PC-9 (cell line): ENCODE measurements at regions of chr3 and their contacts with region 1.

Region 1: GRCh38 chr3:8869613-8870012 is 93.7 kb downstream of the RAD18 start:
- DNase-seq: peak; percentile 70 to 98
- H3K4me3 ChIP-seq: no peak overlapping the region
- H3K27ac ChIP-seq: peak overlapping the region; percentile 94
- H3K4me1 ChIP-seq: peaks cover 29% of the 10 kb centered on the region
- H3K27me3 ChIP-seq: no peaks in the 10 kb centered on the region
- CTCF ChIP-seq: no peak

Region 2: DNA sequence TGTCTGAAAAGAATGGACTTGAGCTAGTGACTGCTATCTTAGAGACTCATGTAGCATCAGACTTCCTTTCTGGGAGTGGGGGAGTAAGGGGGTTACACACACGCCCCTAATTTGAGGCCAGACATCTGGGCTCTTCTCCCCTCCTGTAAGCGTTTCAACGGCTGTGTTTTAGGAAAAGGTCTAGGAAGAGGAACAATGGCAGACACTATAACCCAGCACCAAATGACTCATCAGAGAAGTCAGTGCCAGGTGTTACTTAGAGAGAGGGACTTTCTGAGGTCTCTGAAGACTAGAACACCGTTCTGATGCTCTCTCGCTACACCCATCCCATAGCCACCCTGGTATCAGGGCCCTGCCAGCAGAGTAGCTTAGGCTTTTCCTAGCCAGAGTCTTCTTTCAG is 290.5 kb before region 1 on chr3:
- CTCF ChIA-PET with region 1: no interaction called
- POLR2A ChIA-PET with region 1: no interaction called
- intact Hi-C with region 1: no loop called
- DNase-seq: no peak
- H3K4me3 ChIP-seq: no peak overlapping the region
- H3K27ac ChIP-seq: no peak overlapping the region
- H3K4me1 ChIP-seq: peaks cover 30% of the 10 kb centered on the region
- H3K27me3 ChIP-seq: no peaks in the 10 kb centered on the region
- CTCF ChIP-seq: no peak

Region 3: DNA sequence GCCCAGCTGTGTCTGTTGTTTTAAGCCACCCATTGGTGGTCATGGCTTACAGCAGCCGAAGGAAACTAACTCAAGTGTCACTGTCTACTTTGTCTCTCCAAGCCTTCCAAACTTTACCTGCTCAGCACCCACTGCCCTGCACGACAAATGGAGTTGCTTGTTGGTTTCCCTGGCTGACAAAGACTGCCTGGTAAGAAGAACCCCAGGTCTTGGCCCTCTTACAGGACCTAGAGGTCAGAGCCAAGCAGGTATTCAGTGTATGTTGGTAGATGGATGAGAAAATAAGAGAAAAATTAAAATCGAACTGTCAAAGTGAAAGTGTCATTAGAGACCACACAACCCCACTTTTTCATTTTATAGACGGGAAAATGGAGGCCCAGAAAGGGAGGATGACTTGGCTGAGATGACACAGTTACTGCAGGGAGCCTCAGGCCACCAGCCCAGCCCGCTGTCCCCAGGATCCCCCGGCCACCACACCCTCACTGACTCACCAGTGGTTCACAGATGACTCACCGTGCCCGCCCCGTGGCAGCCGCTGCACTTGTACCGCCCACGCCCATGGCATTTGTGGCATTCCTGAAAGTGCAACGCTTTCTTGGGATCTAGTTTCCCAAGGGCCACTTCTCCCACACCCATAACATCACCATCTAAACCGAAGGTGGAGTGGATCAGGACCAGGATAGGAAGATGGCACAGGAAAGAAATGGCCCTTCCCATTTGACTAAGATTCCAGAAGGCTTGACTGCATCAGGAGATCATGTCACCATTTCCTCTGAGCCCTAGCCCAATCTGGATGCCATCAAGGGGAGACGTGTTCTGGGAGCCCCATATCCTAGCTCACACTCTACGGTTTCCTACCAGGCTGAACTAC is 240.2 kb before region 1 on chr3:
- CTCF ChIA-PET with region 1: no interaction called
- POLR2A ChIA-PET with region 1: no interaction called
- intact Hi-C with region 1: loop called (anchors 1 kb)
- DNase-seq: peak; percentile 90 to 91
- H3K4me3 ChIP-seq: no peak overlapping the region
- H3K27ac ChIP-seq: peak overlapping the region; percentile 90
- H3K4me1 ChIP-seq: peaks cover 27% of the 10 kb centered on the region
- H3K27me3 ChIP-seq: no peaks in the 10 kb centered on the region
- CTCF ChIP-seq: no peak

Region 4: GRCh38 chr3:8776406-8776805 is 93.2 kb before region 1 on chr3:
- CTCF ChIA-PET with region 1: interaction called, 3 read pairs
- POLR2A ChIA-PET with region 1: no interaction called
- intact Hi-C with region 1: loop called (anchors 10 kb)
- DNase-seq: peak in 1 of 2 experiments; percentile 15
- H3K4me3 ChIP-seq: no peak overlapping the region
- H3K27ac ChIP-seq: no peak overlapping the region
- H3K4me1 ChIP-seq: no peaks in the 10 kb centered on the region
- H3K27me3 ChIP-seq: no peaks in the 10 kb centered on the region
- CTCF ChIP-seq: no peak

Region 5: DNA sequence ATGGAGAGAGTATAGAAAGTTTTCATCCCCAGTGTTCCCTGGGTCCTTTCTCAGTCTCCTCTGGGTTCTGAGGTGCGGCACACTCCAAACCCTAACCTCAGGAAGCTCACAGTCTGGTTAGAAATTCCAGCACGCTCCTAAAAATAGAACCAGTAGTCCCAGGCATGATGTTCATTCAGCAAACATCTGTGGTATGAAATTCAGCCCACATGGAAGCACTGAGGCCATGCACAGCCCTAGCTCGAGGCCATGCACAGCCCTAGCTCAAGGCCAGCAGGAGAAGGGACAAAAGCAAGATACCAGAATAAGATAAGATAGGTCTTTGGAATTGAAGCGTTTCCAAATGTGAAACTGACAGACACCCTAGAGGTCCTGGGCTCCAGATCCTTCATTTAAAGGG is 17.9 kb before region 1 on chr3:
- CTCF ChIA-PET with region 1: no interaction called
- POLR2A ChIA-PET with region 1: interaction called, 8 read pairs
- intact Hi-C with region 1: loop called (anchors 1 kb)
- DNase-seq: peak in 1 of 2 experiments; percentile 67
- H3K4me3 ChIP-seq: no peak overlapping the region
- H3K27ac ChIP-seq: no peak overlapping the region
- H3K4me1 ChIP-seq: no peaks in the 10 kb centered on the region
- H3K27me3 ChIP-seq: no peaks in the 10 kb centered on the region
- CTCF ChIP-seq: no peak

Region 6: GRCh38 chr3:8938021-8938420 is 68.4 kb after region 1 on chr3:
- CTCF ChIA-PET with region 1: no interaction called
- POLR2A ChIA-PET with region 1: no interaction called
- intact Hi-C with region 1: loop called (anchors 2 kb)
- DNase-seq: no peak
- H3K4me3 ChIP-seq: no peak overlapping the region
- H3K27ac ChIP-seq: peak overlapping the region; percentile 84
- H3K4me1 ChIP-seq: peaks cover 29% of the 10 kb centered on the region
- H3K27me3 ChIP-seq: no peaks in the 10 kb centered on the region
- CTCF ChIP-seq: peak; percentile 66

Region 7: DNA sequence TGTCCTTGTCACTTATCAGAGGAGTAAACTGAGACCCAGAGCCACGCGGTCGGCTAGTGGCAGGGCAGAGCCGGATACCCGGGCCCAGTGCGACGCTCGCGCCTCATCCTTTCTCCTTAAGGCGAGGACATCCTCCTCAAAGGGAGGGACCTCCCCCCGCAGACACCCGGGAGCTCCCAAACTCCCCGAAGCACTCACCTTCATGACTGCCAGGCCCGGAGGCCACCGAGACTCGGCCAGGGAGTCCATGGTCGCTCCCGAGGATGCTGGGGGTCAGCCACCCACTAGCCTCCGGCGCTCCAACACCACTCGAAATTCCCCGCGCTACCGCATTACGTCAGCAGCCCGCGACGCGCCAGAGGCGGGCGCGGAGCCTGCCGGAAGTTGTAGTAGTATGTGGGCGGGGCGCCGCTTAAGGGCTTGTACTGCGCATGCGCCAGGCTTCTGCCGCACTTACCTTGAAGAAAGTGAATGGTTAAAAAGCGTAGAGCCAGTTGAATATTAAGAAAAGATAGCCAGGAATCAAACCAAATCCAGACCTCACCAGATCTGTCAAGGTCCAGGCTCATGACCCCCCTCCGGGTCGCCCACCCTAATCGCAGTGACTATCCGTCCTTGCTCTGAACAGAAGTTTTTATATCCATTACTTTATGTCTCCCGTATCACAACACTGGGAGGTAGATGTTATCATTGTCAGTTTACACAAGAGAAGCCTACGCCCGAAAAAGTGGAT is 93.7 kb after region 1 on chr3 and contains the start of gene RAD18:
- CTCF ChIA-PET with region 1: no interaction called
- POLR2A ChIA-PET with region 1: no interaction called
- intact Hi-C with region 1: loop called (anchors 5 kb)
- DNase-seq: peak; percentile 70 to 90
- H3K4me3 ChIP-seq: peak within 1 kb of the TSS; percentile 69
- H3K27ac ChIP-seq: peak within 1 kb of the TSS; percentile 77
- H3K4me1 ChIP-seq: peaks cover 37% of the 10 kb centered on the region
- H3K27me3 ChIP-seq: no peaks in the 10 kb centered on the region
- CTCF ChIP-seq: no peak
- total RNA-seq, gene RAD18: 19.1 and 29.1 TPM in 2 replicates